WTC11 (cell line): ENCODE measurements at regions of chr10 and their contacts with region 1.

Region 1: GRCh38 chr10:100518761-100519241 is 860 bp downstream of the SEC31B start:
- DNase-seq: peak; percentile 69
- ATAC-seq: peak; percentile 36
- H3K4me3 Mint-ChIP-seq: peak overlapping the region; percentile 91
- H3K27ac Mint-ChIP-seq: no peak overlapping the region
- H3K4me1 Mint-ChIP-seq: 0 out of 2 replicates have a peak, but pooled peaks cover 8% of the 10 kb centered on the region
- H3K27me3 Mint-ChIP-seq: peaks cover 42% of the 10 kb centered on the region
- CTCF ChIP-seq: peak; percentile 56; the same call in 1 of the 2 replicates

Region 2: GRCh38 chr10:100373298-100374136 is 145.3 kb before region 1 on chr10:
- CTCF ChIA-PET with region 1: interaction called, 10 read pairs
- POLR2A ChIA-PET with region 1: no interaction called
- DNase-seq: peak; percentile 98
- ATAC-seq: peak; percentile 94
- H3K4me3 Mint-ChIP-seq: no peak overlapping the region
- H3K27ac Mint-ChIP-seq: no peak overlapping the region
- H3K4me1 Mint-ChIP-seq: peaks cover 21% of the 10 kb centered on the region
- H3K27me3 Mint-ChIP-seq: no peaks in the 10 kb centered on the region
- CTCF ChIP-seq: no peak

Region 3: DNA sequence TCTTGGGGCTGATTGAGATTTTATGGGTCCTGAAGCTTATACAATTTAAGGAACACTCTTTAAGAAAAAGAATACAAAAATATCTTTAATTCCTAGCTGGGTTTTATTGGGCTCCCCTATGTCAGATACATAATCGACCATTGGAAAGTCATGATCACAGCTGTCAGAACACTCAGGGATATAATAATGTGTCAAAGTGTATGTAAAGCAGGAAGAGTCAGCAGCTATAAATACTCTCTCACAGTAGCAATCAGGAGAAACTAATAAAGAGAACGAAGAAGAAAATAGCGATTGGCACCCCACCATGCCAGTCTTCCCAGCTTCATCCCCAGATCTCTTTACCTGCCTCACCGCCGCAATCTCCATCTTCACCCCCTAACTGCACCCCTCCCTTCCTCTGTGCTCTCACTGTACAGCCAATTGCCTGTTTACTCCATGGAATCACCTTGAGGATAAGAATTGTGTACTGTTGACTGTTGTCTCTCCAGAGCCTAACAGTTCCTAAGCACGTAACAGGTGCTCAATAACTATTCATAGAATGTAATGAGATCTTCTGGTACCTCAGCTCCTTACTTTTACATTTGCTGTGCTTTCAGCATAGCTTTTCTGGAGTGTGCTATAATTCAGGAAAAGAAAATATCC is 80.0 kb before region 1 on chr10:
- CTCF ChIA-PET with region 1: interaction called, 72 read pairs
- POLR2A ChIA-PET with region 1: no interaction called
- DNase-seq: no peak
- ATAC-seq: no peak
- H3K4me3 Mint-ChIP-seq: no peak overlapping the region
- H3K27ac Mint-ChIP-seq: no peak overlapping the region
- H3K4me1 Mint-ChIP-seq: peaks cover 6% of the 10 kb centered on the region
- H3K27me3 Mint-ChIP-seq: peaks cover 13% of the 10 kb centered on the region
- CTCF ChIP-seq: no peak

Region 4: GRCh38 chr10:100501423-100501822 is 17.4 kb before region 1 on chr10:
- CTCF ChIA-PET with region 1: interaction called, 96 read pairs
- POLR2A ChIA-PET with region 1: no interaction called
- DNase-seq: no peak
- ATAC-seq: no peak
- H3K4me3 Mint-ChIP-seq: no peak overlapping the region
- H3K27ac Mint-ChIP-seq: no peak overlapping the region
- H3K4me1 Mint-ChIP-seq: no peaks in the 10 kb centered on the region
- H3K27me3 Mint-ChIP-seq: peaks cover 92% of the 10 kb centered on the region
- CTCF ChIP-seq: no peak

Region 5: GRCh38 chr10:100535715-100536353 is 17.0 kb after region 1 on chr10 and contains the start of gene HIF1AN:
- CTCF ChIA-PET with region 1: interaction called, 71 read pairs
- POLR2A ChIA-PET with region 1: interaction called, 3 read pairs
- DNase-seq: peak; percentile 86
- ATAC-seq: peak; percentile 98
- H3K4me3 Mint-ChIP-seq: no peak within 1 kb of the TSS
- H3K27ac Mint-ChIP-seq: peak within 1 kb of the TSS; percentile 73
- H3K4me1 Mint-ChIP-seq: peaks cover 7% of the 10 kb centered on the region; the same call in 1 of the 2 replicates
- H3K27me3 Mint-ChIP-seq: no peaks in the 10 kb centered on the region
- CTCF ChIP-seq: peak; percentile 69
- total RNA-seq, gene HIF1AN: 49.9 to 58.3 TPM (median 53.9 TPM) in 3 replicates

Region 6: GRCh38 chr10:100634034-100634433 is 115.2 kb after region 1 on chr10:
- CTCF ChIA-PET with region 1: no interaction called
- POLR2A ChIA-PET with region 1: no interaction called
- DNase-seq: no peak
- ATAC-seq: peak; percentile 54
- H3K4me3 Mint-ChIP-seq: no peak overlapping the region
- H3K27ac Mint-ChIP-seq: no peak overlapping the region
- H3K4me1 Mint-ChIP-seq: peaks cover 18% of the 10 kb centered on the region
- H3K27me3 Mint-ChIP-seq: peaks cover 7% of the 10 kb centered on the region
- CTCF ChIP-seq: no peak

Region 7: DNA sequence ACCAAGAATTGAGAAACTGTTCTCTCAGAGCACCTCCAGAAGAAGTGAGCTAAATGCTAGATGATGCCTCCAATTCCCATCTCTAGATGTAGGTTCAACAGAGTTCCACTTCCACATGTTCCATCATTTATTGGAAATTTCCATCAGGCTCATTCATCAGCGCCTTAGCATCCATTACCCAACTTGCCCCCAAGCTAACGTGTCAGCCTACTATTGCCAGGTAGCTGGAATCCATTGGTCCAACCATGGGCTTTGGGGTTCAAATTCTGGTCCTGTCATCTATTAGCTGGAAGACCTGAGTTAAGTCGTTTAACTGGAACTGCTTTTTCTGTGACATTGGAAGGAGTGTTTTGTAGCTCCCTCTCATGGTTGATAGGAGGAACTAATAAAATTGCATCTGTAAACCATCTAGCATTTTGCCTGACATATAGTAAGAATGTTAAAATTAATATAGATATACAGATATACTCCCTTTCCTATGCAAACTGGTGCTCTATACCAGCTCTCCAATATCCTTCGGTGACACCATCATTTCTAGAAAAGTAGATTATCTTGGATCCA is 370.1 kb after region 1 on chr10:
- CTCF ChIA-PET with region 1: interaction called, 10 read pairs
- POLR2A ChIA-PET with region 1: no interaction called
- DNase-seq: no peak
- ATAC-seq: peak; percentile 27; the same call in 1 of the 2 replicates
- H3K4me3 Mint-ChIP-seq: no peak overlapping the region
- H3K27ac Mint-ChIP-seq: no peak overlapping the region
- H3K4me1 Mint-ChIP-seq: peaks cover 14% of the 10 kb centered on the region
- H3K27me3 Mint-ChIP-seq: peaks cover 6% of the 10 kb centered on the region; the same call in 1 of the 2 replicates
- CTCF ChIP-seq: no peak